Upper lobe of right lung (tissue), 1 donor: ENCODE measurements at regions of chr10 and their contacts with region 1.

Region 1: GRCh38 chr10:43461950-43462349 is 25.0 kb downstream of the ZNF487 start:
- DNase-seq: no peak
- ATAC-seq: peak; percentile 87
- H3K4me3 ChIP-seq: no peak overlapping the region
- H3K27ac ChIP-seq: no peak overlapping the region
- H3K4me1 ChIP-seq: no peaks in the 10 kb centered on the region
- H3K27me3 ChIP-seq: no peaks in the 10 kb centered on the region
- CTCF ChIP-seq: peak; percentile 72

Region 2: DNA sequence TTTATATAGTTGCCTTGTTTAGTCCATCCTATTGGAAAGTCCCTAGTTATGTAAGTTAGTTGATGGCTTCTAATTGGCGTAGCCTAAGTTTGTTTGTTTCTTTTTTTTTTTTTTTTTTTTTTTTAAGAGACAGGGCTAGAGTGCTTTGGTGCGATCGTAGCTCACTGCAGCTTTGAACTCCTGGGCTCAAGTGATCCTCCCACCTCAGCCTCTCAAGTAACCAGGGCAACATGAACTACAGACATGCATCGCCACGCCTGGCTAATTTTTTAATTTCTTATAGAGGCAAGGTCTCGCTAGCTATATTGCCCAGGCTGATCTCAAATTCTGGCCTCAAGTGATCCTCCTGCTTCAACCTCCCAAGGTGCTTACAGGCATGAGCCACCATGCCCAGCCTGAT is 316.6 kb before region 1 on chr10:
- intact Hi-C with region 1: no loop called
- DNase-seq: no peak
- ATAC-seq: no peak
- H3K4me3 ChIP-seq: no peak overlapping the region
- H3K27ac ChIP-seq: peak overlapping the region; percentile 5
- H3K4me1 ChIP-seq: peaks cover 47% of the 10 kb centered on the region
- H3K27me3 ChIP-seq: no peaks in the 10 kb centered on the region
- CTCF ChIP-seq: no peak

Region 3: GRCh38 chr10:43292755-43293676 is 168.9 kb before region 1 on chr10:
- intact Hi-C with region 1: loop called (anchors 10 kb)
- DNase-seq: no peak
- ATAC-seq: peak; percentile 92
- H3K4me3 ChIP-seq: no peak overlapping the region
- H3K27ac ChIP-seq: no peak overlapping the region
- H3K4me1 ChIP-seq: peaks cover 9% of the 10 kb centered on the region
- H3K27me3 ChIP-seq: peaks cover 7% of the 10 kb centered on the region
- CTCF ChIP-seq: peak; percentile 77

Region 4: DNA sequence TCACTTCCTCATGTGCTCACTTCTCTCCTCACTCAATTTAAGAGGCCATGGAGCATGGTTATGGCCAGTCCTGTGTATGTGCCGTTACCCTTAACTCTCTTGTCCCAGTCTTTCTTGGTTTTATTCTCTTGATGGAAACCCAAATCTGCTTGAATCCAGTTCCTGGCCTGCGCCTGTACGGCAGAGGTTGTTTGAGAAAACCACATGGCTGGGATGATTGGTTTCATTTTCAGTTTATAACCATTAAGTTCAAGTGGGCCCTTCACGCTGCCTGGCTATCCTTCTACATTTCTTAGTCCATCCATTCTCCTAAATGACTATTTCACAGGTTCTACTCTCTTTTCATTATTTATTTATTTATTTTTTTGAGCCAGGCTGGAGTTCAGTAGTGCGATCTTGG is 114.1 kb after region 1 on chr10:
- intact Hi-C with region 1: no loop called
- DNase-seq: no peak
- ATAC-seq: no peak
- H3K4me3 ChIP-seq: no peak overlapping the region
- H3K27ac ChIP-seq: no peak overlapping the region
- H3K4me1 ChIP-seq: no peaks in the 10 kb centered on the region
- H3K27me3 ChIP-seq: no peaks in the 10 kb centered on the region
- CTCF ChIP-seq: no peak

Region 5: DNA sequence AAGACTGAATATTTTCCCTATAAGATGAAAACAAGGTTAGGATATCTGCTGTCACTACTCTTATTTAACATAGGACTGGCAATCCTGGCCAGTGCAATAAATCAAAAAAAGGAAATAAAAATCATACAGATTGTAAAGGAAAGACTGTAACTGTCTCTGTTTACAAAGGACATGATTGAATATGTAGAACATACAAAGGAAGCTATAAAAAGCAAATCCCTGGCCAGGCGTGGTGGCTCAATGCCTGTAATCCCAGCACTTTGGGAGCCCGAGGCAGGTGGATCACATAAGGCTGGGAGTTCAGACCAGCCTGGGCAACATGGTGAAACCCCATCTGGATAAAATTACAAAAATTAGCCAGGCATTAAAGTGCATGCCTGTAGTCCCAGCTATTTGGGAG is 160.1 kb after region 1 on chr10:
- intact Hi-C with region 1: no loop called
- DNase-seq: no peak
- ATAC-seq: no peak
- H3K4me3 ChIP-seq: no peak overlapping the region
- H3K27ac ChIP-seq: no peak overlapping the region
- H3K4me1 ChIP-seq: no peaks in the 10 kb centered on the region
- H3K27me3 ChIP-seq: no peaks in the 10 kb centered on the region
- CTCF ChIP-seq: no peak